ENCODE measurements at regions of chr5 and their contacts with region 1.

Region 1: GRCh38 chr5:55534436-55535198 is at the start of gene PLPP1:
- DNase-seq: peak; percentile 94 to 98
- ATAC-seq: peak; percentile 98
- H3K4me3 ChIP-seq: peak within 1 kb of the TSS; percentile 68 to 82
- H3K27ac ChIP-seq: peak within 1 kb of the TSS; percentile 53 to 93
- H3K4me1 ChIP-seq: no peaks in the 10 kb centered on the region
- H3K27me3 ChIP-seq: no peaks in the 10 kb centered on the region
- total RNA-seq, gene PLPP1: 127 to 214 TPM

Region 2: DNA sequence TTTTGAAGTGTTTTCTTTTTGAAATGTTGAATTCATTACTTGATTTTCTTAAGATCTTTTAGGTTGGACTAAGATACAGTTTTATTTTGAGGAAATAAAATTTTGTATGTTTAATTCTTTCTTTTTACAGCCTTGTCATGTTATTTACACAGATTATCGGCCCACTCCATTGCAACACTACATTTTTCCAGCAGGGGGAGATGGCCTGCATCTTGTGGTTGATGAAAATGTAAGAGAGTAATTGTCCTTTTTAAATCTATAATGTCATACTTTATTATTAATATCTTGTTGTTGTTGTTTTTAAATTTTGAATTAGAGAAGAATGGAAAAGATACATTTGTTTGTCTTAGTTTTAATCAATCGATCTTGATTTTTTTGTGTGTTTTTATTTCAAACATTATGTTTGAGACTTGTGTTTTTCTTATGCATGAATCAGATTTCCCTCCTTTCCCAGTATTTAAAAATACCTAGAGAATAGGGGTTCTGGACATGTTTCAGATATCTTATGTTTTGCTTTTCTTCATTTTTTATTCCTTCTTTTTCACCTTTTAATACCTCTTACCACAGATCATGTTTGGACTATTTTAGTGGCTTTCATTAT is 190.1 kb before region 1 on chr5:
- intact Hi-C with region 1: loop called in 1 of 2 experiments (anchors 10 kb)
- DNase-seq: no peak
- ATAC-seq: no peak
- H3K4me3 ChIP-seq: no peak overlapping the region
- H3K27ac ChIP-seq: peak overlapping the region in 1 of 2 donors; percentile 67
- H3K4me1 ChIP-seq: peaks cover 0 to 2% of the 10 kb centered on the region in 2 donors
- H3K27me3 ChIP-seq: no peaks in the 10 kb centered on the region

Region 3: GRCh38 chr5:55439008-55439407 is 95.6 kb before region 1 on chr5:
- intact Hi-C with region 1: loop called in 1 of 2 experiments (anchors 2 kb)
- DNase-seq: peak in 1 of 2 donors; percentile 55
- ATAC-seq: peak; percentile 77
- H3K4me3 ChIP-seq: no peak overlapping the region
- H3K27ac ChIP-seq: peak overlapping the region; percentile 90 to 95
- H3K4me1 ChIP-seq: peaks cover 5 to 8% of the 10 kb centered on the region in 2 donors
- H3K27me3 ChIP-seq: no peaks in the 10 kb centered on the region

Region 4: GRCh38 chr5:55564721-55565120 is 30.1 kb after region 1 on chr5:
- intact Hi-C with region 1: loop called in 1 of 2 experiments (anchors 2 kb)
- DNase-seq: no peak
- ATAC-seq: no peak
- H3K4me3 ChIP-seq: no peak overlapping the region
- H3K27ac ChIP-seq: no peak overlapping the region
- H3K4me1 ChIP-seq: no peaks in the 10 kb centered on the region
- H3K27me3 ChIP-seq: no peaks in the 10 kb centered on the region

Region 5: GRCh38 chr5:55601204-55601618 is 66.6 kb after region 1 on chr5:
- intact Hi-C with region 1: loop called (anchors 2 to 5 kb)
- DNase-seq: peak; percentile 86 to 89
- ATAC-seq: peak; percentile 87
- H3K4me3 ChIP-seq: no peak overlapping the region
- H3K27ac ChIP-seq: peak overlapping the region; percentile 95 to 99
- H3K4me1 ChIP-seq: peaks cover 0 to 17% of the 10 kb centered on the region in 2 donors
- H3K27me3 ChIP-seq: no peaks in the 10 kb centered on the region

Region 6: DNA sequence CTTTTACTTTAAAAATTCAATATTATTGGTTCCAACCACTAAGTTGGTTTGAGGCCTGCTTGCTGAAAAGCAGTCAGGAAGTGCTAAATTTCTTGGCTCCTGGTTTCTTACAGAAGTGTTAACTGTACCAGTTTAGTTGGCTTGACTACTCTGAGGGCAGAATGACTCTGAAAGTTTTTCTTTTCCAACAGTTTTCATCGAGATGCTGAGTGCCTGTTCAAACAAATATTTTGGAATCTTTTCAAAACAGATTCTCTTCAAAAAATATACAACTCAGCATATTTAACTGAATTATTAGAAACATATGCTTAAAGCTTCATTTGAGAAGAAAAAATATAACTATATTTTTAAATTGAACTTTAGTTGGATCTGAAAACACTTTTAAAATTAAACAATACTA is 140.5 kb after region 1 on chr5:
- intact Hi-C with region 1: loop called in 1 of 2 experiments (anchors 10 kb)
- DNase-seq: no peak
- ATAC-seq: no peak
- H3K4me3 ChIP-seq: no peak overlapping the region
- H3K27ac ChIP-seq: no peak overlapping the region
- H3K4me1 ChIP-seq: peaks cover 0 to 3% of the 10 kb centered on the region in 2 donors
- H3K27me3 ChIP-seq: no peaks in the 10 kb centered on the region

Measured in aorta (tissue), 5 donors.